Transverse colon (tissue), 4 donors: ENCODE measurements at regions of chr14 and their contacts with region 1.

Region 1: DNA sequence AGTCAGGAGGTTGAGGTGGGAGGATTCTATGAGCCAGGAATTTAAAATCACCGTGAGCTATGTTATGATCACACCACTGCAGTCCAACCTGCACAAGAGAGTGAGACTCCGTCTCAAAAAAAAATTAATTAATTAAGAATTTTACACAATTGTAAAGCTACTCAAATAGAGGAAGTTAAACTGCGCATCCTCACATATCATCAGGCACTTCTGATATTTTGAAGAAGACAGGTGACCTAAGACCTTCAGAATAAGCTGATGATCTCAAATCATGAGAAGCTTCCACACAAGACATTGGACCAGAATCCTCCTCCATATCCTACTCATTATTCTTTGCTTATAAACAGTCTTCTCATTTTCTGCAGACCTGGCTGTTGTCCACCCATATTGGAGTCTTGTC is 800.9 kb downstream of the TMEM121 start:
- DNase-seq: no peak
- H3K4me3 ChIP-seq: no peak overlapping the region
- H3K27ac ChIP-seq: no peak overlapping the region
- H3K4me1 ChIP-seq: no peaks in the 10 kb centered on the region
- H3K27me3 ChIP-seq: no peaks in the 10 kb centered on the region
- CTCF ChIP-seq: no peak
- EP300 ChIP-seq: no peak
- POLR2A ChIP-seq: no peak

Region 2: DNA sequence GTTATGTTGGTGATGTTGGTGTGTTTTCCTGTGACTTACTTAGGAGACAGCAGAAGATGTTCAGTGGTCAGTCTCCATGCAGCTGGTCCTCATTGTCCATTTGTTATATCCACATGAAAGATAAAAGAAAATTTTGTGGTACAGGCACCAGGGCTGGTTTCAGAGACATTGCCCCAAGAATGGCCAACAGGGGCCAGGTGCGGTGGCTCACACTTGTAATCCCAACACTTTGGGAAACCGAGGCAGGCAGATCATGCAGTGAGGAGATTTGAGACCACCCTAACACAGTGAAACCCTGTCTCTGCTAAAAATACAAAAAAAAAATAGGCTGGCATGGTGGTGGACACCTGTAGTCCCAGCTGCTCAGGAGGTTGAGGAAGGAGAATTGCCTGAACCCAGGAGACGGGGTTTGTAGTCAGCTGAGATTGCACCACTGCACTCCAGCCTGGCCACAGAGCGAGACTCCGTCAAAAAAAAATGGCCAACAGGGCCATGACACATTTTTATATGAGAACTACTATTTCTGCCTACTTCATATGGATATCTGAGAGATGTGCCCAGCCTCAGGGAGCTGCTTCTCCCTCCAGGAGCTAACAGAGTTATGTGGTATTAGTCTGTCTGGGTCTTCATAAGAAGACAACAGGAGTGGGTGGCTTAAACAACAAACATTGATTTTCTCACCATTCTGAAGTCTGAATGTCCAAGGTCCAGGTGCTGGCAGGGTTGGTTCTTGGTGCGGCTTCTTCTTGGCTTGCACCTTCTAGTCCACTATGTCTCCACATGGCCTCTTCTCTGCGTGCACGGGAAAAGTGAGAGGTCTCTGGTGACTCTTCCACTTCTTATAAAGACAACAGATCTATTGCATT is 20.9 kb after region 1 on chr14:
- in situ Hi-C with region 1: no loop called
- intact Hi-C with region 1: loop called (anchors 2 kb)
- DNase-seq: no peak
- H3K4me3 ChIP-seq: no peak overlapping the region
- H3K27ac ChIP-seq: no peak overlapping the region
- H3K4me1 ChIP-seq: no peaks in the 10 kb centered on the region
- H3K27me3 ChIP-seq: no peaks in the 10 kb centered on the region
- CTCF ChIP-seq: no peak
- EP300 ChIP-seq: no peak
- POLR2A ChIP-seq: no peak

Region 3: GRCh38 chr14:106372870-106373652 is 45.8 kb after region 1 on chr14:
- in situ Hi-C with region 1: loop called in 1 of 4 experiments (anchors 10 kb)
- intact Hi-C with region 1: no loop called
- DNase-seq: peak; percentile 72
- H3K4me3 ChIP-seq: no peak overlapping the region
- H3K27ac ChIP-seq: no peak overlapping the region
- H3K4me1 ChIP-seq: no peaks in the 10 kb centered on the region
- H3K27me3 ChIP-seq: no peaks in the 10 kb centered on the region
- CTCF ChIP-seq: peak; percentile 45 to 68 (median 58)
- EP300 ChIP-seq: no peak
- POLR2A ChIP-seq: no peak

Region 4: DNA sequence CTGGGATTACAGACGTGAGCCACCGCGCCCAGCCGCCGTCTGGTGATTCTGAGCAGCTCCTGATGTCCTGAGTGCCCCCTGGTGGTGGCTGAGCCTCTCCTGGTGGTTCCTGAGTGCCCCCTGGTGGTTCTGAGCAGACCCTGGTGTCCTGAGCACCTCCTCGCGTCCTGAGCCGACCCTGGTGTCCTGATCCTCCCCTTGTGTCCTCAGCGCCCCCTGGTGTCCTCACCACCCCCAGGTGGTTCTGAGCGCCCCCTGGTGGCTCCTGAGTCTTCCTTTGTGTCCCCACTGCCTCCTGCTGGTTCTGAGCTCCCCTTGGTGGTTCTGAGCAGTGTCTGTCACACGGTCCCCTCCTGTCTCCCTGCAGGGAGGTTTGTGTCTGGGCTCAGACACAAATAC is 504.1 kb after region 1 on chr14:
- in situ Hi-C with region 1: no loop called
- intact Hi-C with region 1: no loop called
- DNase-seq: peak; percentile 66
- H3K4me3 ChIP-seq: no peak overlapping the region
- H3K27ac ChIP-seq: no peak overlapping the region
- H3K4me1 ChIP-seq: peaks cover 0 to 4% (median 0%) of the 10 kb centered on the region in 4 donors
- H3K27me3 ChIP-seq: no peaks in the 10 kb centered on the region
- CTCF ChIP-seq: peak in 2 of 5 experiments; percentile 35 to 40
- EP300 ChIP-seq: no peak
- POLR2A ChIP-seq: no peak